GM12878 (cell line): ENCODE measurements at regions of chr20 and their contacts with region 1.

Region 1: GRCh38 chr20:59850018-59850641 is 83.3 kb downstream of the SYCP2 start:
- DNase-seq: peak; percentile 9
- ATAC-seq: peak; percentile 67
- H3K4me3 ChIP-seq: no peak overlapping the region
- H3K27ac ChIP-seq: no peak overlapping the region
- H3K4me1 ChIP-seq: no peaks in the 10 kb centered on the region
- H3K27me3 ChIP-seq: no peaks in the 10 kb centered on the region
- CTCF ChIP-seq: peak; percentile 50 to 59 (median 56); a peak in 5 of 6 replicates
- EP300 ChIP-seq: no peak
- POLR2A ChIP-seq: no peak
- RAD21 ChIP-seq: peak; percentile 61

Region 2: DNA sequence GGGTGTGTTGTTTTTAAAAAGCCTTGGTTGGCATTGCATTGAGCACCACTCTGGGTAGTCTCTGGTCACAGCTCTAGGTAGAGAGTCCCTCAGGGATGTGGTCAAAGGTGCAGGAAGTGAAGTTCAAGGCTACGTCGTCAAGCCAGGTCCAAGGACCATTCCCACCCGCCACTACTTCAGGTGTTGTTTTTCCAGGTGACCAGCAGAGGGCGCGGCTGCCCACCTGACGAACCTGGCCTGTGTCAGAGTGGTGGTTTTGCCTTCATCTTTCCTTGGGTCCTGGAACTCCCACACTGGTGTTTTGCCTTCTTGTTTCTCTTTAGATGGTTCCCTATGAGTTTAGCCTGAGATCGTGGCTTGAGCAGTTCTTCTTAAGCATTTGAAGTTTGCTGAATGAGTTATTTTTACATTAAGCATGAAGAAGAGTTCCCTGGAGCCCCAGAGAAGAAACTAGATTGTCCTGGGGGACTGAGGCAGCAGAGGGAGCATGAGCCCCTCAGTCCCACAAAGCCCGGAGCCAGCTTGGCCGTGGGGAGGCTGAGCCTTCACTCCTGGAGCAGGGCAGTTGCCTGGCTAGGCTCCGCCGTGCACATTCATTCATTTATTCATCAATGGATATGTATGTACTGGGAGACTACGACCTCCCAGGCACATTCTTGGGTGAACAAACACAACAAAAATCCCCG is 251.4 kb before region 1 on chr20:
- CTCF ChIA-PET with region 1: interaction called, 20 read pairs
- POLR2A ChIA-PET with region 1: no interaction called
- RAD21 ChIA-PET with region 1: interaction called, 3 read pairs
- SMC1A ChIA-PET with region 1: interaction called, 3 read pairs
- in situ Hi-C with region 1: no loop called
- intact Hi-C with region 1: loop called (anchors 2 kb)
- DNase-seq: peak; percentile 8
- ATAC-seq: peak; percentile 88
- H3K4me3 ChIP-seq: no peak overlapping the region
- H3K27ac ChIP-seq: no peak overlapping the region
- H3K4me1 ChIP-seq: no peaks in the 10 kb centered on the region
- H3K27me3 ChIP-seq: peaks cover 2 to 4% of the 10 kb centered on the region in 2 experiments
- CTCF ChIP-seq: peak; percentile 84 to 90 (median 88)
- EP300 ChIP-seq: no peak
- POLR2A ChIP-seq: no peak
- RAD21 ChIP-seq: peak; percentile 76

Region 3: GRCh38 chr20:59835448-59836395 is 14.4 kb before region 1 on chr20:
- CTCF ChIA-PET with region 1: interaction called, 70 read pairs
- POLR2A ChIA-PET with region 1: no interaction called
- RAD21 ChIA-PET with region 1: interaction called, 6 read pairs
- SMC1A ChIA-PET with region 1: interaction called, 56 read pairs
- in situ Hi-C with region 1: no loop called
- intact Hi-C with region 1: no loop called
- DNase-seq: no peak
- ATAC-seq: peak; percentile 71
- H3K4me3 ChIP-seq: no peak overlapping the region
- H3K27ac ChIP-seq: no peak overlapping the region
- H3K4me1 ChIP-seq: peaks cover 17% of the 10 kb centered on the region
- H3K27me3 ChIP-seq: no peaks in the 10 kb centered on the region; a peak in 1 of 4 replicates
- CTCF ChIP-seq: no peak
- EP300 ChIP-seq: no peak
- POLR2A ChIP-seq: no peak
- RAD21 ChIP-seq: no peak

Region 4: GRCh38 chr20:59972037-59972801 is 122.1 kb after region 1 on chr20:
- CTCF ChIA-PET with region 1: no interaction called
- POLR2A ChIA-PET with region 1: no interaction called
- RAD21 ChIA-PET with region 1: no interaction called
- SMC1A ChIA-PET with region 1: no interaction called
- in situ Hi-C with region 1: no loop called
- intact Hi-C with region 1: no loop called
- DNase-seq: no peak
- ATAC-seq: no peak
- H3K4me3 ChIP-seq: no peak overlapping the region
- H3K27ac ChIP-seq: no peak overlapping the region
- H3K4me1 ChIP-seq: no peaks in the 10 kb centered on the region
- H3K27me3 ChIP-seq: no peaks in the 10 kb centered on the region
- CTCF ChIP-seq: no peak
- EP300 ChIP-seq: no peak
- POLR2A ChIP-seq: no peak
- RAD21 ChIP-seq: no peak